Activated CD8-positive, alpha-beta T cell treated with anti-CD3 and anti-CD28 coated beads, Interleukin-2, amount 10 ng/mL, durations not matched to agents 7 days and 5 days (primary cell): ENCODE measurements at regions of chr2 and their contacts with region 1.

Region 1: GRCh38 chr2:72862239-72862988 is 24.8 kb upstream of the SPR start:
- DNase-seq: peak; percentile 88
- ATAC-seq: peak; percentile 99
- H3K4me3 Mint-ChIP-seq: peak overlapping the region; percentile 55
- H3K27ac Mint-ChIP-seq: no peak overlapping the region
- H3K4me1 Mint-ChIP-seq: peaks cover 11% of the 10 kb centered on the region
- H3K27me3 Mint-ChIP-seq: peaks cover 42% of the 10 kb centered on the region

Region 2: GRCh38 chr2:72770879-72771461 is 91.4 kb before region 1 on chr2:
- CTCF ChIA-PET with region 1: interaction called, 22 read pairs
- POLR2A ChIA-PET with region 1: no interaction called
- DNase-seq: peak; percentile 81
- ATAC-seq: no peak
- H3K4me3 Mint-ChIP-seq: no peak overlapping the region
- H3K27ac Mint-ChIP-seq: no peak overlapping the region
- H3K4me1 Mint-ChIP-seq: no peaks in the 10 kb centered on the region
- H3K27me3 Mint-ChIP-seq: no peaks in the 10 kb centered on the region

Region 3: GRCh38 chr2:72837171-72837570 is 25.2 kb before region 1 on chr2:
- CTCF ChIA-PET with region 1: interaction called, 10 read pairs
- POLR2A ChIA-PET with region 1: no interaction called
- DNase-seq: no peak
- ATAC-seq: no peak
- H3K4me3 Mint-ChIP-seq: no peak overlapping the region
- H3K27ac Mint-ChIP-seq: no peak overlapping the region
- H3K4me1 Mint-ChIP-seq: peaks cover 12% of the 10 kb centered on the region
- H3K27me3 Mint-ChIP-seq: peaks cover 26% of the 10 kb centered on the region

Region 4: DNA sequence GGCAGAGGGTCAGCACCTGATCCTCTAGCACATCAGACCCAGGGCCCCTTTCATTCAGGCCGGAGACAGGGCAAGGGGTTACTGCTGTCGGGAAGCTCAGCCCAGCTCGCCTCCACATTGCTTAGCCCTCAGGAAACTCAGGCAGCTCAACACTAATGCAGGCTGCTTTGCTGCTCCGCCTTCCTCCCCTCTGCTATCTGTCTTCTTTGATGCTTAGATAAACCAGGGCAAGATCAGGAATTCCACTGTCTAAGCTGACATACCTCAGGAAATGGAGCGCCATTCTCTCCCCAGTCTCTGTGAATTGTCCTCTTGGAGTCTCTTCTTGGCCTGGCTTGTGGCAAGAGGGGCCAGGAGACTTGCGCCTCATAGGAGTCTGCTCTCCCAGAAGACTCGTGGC is 11.1 kb before region 1 on chr2:
- CTCF ChIA-PET with region 1: interaction called, 10 read pairs
- POLR2A ChIA-PET with region 1: no interaction called
- DNase-seq: no peak
- ATAC-seq: no peak
- H3K4me3 Mint-ChIP-seq: no peak overlapping the region
- H3K27ac Mint-ChIP-seq: no peak overlapping the region
- H3K4me1 Mint-ChIP-seq: no peaks in the 10 kb centered on the region
- H3K27me3 Mint-ChIP-seq: peaks cover 24% of the 10 kb centered on the region

Region 5: DNA sequence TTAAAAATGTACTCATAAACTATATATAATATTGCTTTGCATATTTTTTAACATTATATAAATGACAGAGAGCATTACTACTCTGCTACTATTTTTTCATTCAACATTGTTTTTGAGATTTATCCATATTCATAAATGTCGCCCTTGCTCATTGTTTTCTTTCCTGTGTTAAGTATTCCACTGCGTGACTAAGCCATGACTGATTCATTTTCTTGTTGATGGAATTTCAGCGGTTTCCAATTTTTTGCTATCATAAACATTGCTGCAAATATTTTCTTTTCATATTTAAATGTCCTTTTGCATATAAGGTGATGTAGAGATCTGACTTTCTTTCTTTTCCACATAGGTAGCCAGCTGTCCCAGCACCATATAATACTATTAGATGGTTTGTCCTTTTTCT is 151.5 kb after region 1 on chr2:
- CTCF ChIA-PET with region 1: no interaction called
- POLR2A ChIA-PET with region 1: no interaction called
- DNase-seq: no peak
- ATAC-seq: no peak
- H3K4me3 Mint-ChIP-seq: no peak overlapping the region
- H3K27ac Mint-ChIP-seq: no peak overlapping the region
- H3K4me1 Mint-ChIP-seq: no peaks in the 10 kb centered on the region
- H3K27me3 Mint-ChIP-seq: peaks cover 3% of the 10 kb centered on the region